Activated CD4-positive, alpha-beta memory T cell treated with anti-CD3 and anti-CD28 coated beads, Interleukin-2, amount 10 ng/mL, durations not matched to agents 7 days and 5 days (primary cell): ENCODE measurements at regions of chr11 and their contacts with region 1.

Region 1: GRCh38 chr11:250740-251299 is 14.0 kb downstream of the PSMD13 start:
- DNase-seq: peak; percentile 84
- H3K4me3 Mint-ChIP-seq: no peak overlapping the region
- H3K27ac Mint-ChIP-seq: peak overlapping the region; percentile 59
- H3K4me1 Mint-ChIP-seq: peaks cover 11% of the 10 kb centered on the region
- H3K27me3 Mint-ChIP-seq: no peaks in the 10 kb centered on the region

Region 2: DNA sequence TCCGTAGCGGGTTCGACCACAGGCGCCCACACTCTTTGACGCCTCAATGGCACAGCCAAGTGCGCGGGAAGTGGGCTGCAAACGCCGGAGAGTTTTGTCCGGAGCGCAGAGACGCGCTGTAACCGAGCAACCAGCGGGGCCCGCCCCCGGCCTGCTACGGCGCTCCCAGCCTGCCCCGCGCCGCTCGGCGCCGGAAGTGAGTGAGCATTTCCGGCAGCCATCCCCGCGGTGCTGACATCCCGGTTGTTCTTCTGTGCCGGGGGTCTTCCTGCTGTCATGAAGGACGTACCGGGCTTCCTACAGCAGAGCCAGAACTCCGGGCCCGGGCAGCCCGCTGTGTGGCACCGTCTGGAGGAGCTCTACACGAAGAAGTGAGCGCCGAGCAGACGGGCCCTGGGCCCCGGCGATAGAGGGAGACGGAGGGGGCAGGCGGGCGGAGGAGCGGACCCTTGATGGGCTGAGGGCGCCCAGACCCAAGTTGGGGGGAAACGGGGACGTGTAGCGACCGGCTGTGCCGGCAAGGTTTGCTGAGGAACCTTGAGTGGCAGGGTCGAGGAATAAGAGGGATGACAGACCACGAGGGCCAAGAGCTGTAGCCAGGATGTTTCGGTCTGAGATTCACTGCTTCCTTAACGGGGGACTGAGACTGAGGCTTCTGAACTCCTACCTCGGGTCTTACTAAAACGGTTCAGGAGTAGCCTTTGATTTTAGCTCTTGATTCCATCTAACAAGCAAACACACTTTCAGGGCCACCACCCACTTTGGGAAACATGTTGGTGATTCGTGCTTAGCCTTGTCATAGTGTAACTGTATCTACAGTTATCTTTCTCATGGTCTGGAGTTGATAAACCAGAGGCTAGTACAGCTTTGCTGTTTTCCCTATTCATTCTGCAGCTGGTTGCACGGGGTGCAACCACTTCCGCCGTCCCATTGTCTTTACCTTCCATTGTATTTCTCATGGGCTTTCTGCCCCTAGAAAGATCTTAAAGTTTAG is 13.7 kb before region 1 on chr11 and contains the start of gene PSMD13:
- CTCF ChIA-PET with region 1: interaction called, 14 read pairs
- POLR2A ChIA-PET with region 1: interaction called, 31 read pairs
- DNase-seq: peak; percentile 90
- H3K4me3 Mint-ChIP-seq: peak within 1 kb of the TSS; percentile 92
- H3K27ac Mint-ChIP-seq: peak within 1 kb of the TSS; percentile 98
- H3K4me1 Mint-ChIP-seq: peaks cover 49% of the 10 kb centered on the region
- H3K27me3 Mint-ChIP-seq: no peaks in the 10 kb centered on the region
- total RNA-seq, gene PSMD13: 156 to 160 TPM

Region 3: DNA sequence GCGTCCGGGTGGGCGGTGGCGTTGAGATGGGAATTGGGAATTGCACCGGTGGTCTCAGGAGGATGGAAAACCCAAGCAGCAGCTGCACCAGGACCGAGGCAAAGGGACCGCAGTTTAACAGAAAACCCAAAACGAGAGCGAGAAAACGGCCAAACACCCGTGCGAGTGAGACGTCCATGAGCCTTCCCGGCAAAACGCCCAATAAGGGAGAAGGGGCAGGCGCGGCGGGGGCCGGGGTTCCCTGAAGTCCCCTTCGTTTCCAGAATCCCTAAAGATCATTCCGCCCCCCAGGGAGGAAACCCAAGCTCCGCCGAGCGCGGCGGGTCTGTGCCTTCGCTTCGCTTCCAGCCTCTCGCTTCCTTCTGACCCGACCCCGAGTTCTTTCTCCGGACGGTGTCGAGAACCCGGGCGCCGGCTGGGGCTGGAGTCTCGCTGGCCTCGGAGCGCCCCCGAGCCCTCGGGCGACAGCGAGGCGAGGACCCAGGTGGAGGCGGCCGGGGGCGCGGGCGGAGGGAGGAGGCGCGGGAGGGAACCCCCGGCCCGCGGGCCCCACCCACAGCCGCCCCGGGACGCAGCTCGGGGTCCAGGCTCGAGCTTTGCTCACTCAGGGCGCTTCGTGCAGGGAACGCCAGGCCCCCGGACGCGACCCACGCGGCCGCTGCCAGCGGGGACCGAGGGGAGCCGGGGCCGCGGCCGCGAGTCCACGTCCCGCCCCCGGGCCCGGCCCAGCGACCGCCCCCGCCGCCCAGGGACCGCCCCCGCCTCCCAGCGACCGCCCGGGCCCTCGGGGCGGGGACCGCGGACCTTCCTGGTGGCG is 37.7 kb after region 1 on chr11 and contains the start of gene PGGHG:
- CTCF ChIA-PET with region 1: interaction called, 4 read pairs
- POLR2A ChIA-PET with region 1: interaction called, 11 read pairs
- DNase-seq: peak; percentile 71
- H3K4me3 Mint-ChIP-seq: peak within 1 kb of the TSS; percentile 95
- H3K27ac Mint-ChIP-seq: peak within 1 kb of the TSS; percentile 80
- H3K4me1 Mint-ChIP-seq: peaks cover 35% of the 10 kb centered on the region
- H3K27me3 Mint-ChIP-seq: peaks cover 10% of the 10 kb centered on the region
- total RNA-seq, gene PGGHG: 113 to 117 TPM

Region 4: DNA sequence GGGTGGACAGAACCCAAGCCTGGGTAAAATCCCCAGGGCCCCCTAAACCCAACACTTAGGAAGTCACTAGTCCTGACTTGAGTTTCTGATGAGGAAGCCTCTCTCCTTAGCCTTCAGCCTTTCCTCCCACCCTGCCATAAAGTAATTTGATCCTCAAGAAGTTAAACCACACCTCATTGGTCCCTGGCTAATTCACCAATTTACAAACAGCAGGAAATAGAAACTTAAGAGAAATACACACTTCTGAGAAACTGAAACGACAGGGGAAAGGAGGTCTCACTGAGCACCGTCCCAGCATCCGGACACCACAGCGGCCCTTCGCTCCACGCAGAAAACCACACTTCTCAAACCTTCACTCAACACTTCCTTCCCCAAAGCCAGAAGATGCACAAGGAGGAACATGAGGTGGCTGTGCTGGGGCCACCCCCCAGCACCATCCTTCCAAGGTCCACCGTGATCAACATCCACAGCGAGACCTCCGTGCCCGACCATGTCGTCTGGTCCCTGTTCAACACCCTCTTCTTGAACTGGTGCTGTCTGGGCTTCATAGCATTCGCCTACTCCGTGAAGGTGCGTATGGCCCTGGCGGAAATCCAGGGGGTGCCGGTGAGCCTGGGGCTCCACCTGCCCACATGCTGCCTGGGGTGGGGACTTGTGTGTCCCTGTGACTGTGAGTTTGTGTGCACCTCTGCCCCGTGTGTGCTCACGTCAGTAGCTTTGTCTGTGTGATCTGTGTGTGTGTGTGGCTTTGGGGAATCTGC is 63.1 kb after region 1 on chr11 and contains the start of gene IFITM1:
- CTCF ChIA-PET with region 1: interaction called, 14 read pairs
- POLR2A ChIA-PET with region 1: interaction called, 6 read pairs
- DNase-seq: peak; percentile 84
- H3K4me3 Mint-ChIP-seq: peak within 1 kb of the TSS; percentile 88
- H3K27ac Mint-ChIP-seq: peak within 1 kb of the TSS; percentile 96
- H3K4me1 Mint-ChIP-seq: peaks cover 33% of the 10 kb centered on the region
- H3K27me3 Mint-ChIP-seq: no peaks in the 10 kb centered on the region
- total RNA-seq, gene IFITM1: 1,010 to 1,055 TPM

Region 5: GRCh38 chr11:447923-448731 is 197.3 kb after region 1 on chr11:
- CTCF ChIA-PET with region 1: interaction called, 12 read pairs
- POLR2A ChIA-PET with region 1: no interaction called
- DNase-seq: peak; percentile 96
- H3K4me3 Mint-ChIP-seq: peak overlapping the region; percentile 90
- H3K27ac Mint-ChIP-seq: peak overlapping the region; percentile 97
- H3K4me1 Mint-ChIP-seq: peaks cover 32% of the 10 kb centered on the region
- H3K27me3 Mint-ChIP-seq: peaks cover 9% of the 10 kb centered on the region

Region 6: DNA sequence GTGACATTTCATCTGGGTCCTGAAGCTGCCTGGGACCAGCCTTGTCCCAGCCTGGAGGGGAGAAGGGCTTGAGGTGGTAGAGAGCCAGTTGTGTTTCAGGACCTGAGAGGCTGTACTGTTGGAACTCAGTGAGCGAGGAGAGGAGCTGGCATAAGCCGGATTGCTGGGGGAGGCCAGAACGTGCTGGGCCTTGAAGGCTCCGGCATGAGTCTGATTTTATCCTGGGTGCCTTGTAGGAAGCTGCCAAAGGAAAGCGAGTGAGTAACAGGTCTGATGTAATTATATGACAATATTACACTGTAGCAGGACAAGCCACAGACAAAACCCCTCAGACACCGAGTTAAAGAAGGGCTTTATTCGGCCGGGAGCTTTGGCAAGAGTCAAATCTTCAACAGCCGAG is 692.0 kb after region 1 on chr11:
- CTCF ChIA-PET with region 1: no interaction called
- POLR2A ChIA-PET with region 1: no interaction called
- DNase-seq: no peak
- H3K4me3 Mint-ChIP-seq: no peak overlapping the region
- H3K27ac Mint-ChIP-seq: no peak overlapping the region
- H3K4me1 Mint-ChIP-seq: peaks cover 12% of the 10 kb centered on the region
- H3K27me3 Mint-ChIP-seq: no peaks in the 10 kb centered on the region